Sciatic nerve (tissue), 2 donors: ENCODE measurements at regions of chr11 and their contacts with region 1.

Region 1: DNA sequence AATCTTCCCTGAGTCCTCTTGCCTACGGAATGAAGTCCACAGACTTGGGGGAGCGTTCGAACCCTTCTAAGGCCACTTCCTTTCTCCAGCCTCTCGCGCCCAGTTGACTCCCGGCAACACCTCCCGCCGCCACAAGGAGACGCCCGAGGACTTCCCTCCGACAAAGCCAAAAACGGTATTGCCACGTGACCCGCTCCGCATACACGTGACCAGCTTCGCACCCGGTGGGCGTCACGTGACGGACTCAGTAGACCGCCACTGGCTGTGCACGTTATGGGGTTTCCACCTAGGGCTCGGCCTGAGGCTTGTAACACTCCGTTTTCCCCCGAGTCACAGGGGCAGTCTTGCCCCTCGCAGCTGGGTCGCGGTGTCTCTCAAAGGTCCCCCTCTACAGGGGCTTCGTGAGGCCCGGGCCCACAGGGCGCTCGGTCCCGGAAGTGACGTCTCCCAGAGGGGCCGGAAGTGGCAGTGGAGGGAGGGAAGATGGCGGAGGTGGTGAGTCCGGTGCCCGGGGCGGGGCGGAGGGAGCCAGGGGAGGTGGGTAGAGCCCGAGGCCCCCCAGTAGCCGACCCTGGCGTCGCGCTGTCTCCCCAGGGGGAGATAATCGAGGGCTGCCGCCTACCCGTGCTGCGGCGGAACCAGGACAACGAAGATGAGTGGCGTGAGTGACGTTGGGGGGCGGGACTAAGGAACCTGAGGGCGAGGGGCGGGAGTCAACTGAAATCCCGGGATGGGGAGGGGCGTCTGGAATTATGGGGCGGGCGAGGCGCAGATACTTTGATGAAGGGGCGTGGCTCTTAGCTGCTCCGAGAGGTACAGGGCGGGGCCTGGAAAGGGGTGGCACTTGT is at the start of gene KAT5:
- DNase-seq: peak; percentile 100
- ATAC-seq: peak; percentile 96
- total RNA-seq, gene KAT5: 81.5 TPM

Region 2: DNA sequence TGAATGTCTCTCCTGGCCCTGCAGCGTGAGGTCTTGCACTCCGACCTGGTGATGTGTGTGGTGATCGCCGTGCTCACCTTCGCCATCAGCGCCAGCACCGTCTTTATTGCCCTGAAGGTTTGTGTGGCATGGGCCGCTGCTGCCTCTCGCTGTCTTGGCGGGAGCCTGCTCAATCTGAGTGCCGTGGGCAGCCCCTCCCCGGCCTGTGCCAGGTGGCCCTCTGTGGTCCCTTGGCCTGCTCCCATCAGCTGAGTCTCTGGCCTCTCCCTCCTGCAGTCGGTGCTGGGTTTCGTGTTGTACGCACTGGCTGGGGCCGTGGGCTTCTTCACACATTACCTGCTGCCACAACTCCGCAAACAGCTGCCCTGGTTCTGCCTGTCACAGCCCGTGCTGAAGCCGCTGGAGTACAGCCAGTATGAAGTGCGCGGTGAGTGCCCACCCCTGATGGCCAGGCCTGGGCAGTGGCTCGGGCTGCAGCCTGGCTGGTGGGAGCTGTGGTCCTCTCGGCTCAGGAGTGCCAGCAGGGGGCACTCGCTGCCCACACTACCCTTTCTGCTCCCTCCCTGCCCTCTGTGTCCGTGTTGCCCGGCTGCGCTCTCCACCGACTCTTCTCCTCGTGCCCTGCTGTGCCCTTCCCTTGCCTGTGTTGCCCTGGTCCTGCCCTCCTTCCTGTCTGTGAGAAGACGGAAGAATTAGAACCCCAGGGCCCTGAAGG is 86.2 kb before region 1 on chr11:
- intact Hi-C with region 1: loop called (anchors 5 kb)
- DNase-seq: peak; percentile 81
- ATAC-seq: peak; percentile 80

Region 3: GRCh38 chr11:65817835-65818742 is 106.1 kb after region 1 on chr11:
- intact Hi-C with region 1: loop called (anchors 10 kb)
- DNase-seq: peak; percentile 99
- ATAC-seq: peak; percentile 89